Endothelial cell of umbilical vein (primary cell): ENCODE measurements at regions of chr4 and their contacts with region 1.

Region 1: DNA sequence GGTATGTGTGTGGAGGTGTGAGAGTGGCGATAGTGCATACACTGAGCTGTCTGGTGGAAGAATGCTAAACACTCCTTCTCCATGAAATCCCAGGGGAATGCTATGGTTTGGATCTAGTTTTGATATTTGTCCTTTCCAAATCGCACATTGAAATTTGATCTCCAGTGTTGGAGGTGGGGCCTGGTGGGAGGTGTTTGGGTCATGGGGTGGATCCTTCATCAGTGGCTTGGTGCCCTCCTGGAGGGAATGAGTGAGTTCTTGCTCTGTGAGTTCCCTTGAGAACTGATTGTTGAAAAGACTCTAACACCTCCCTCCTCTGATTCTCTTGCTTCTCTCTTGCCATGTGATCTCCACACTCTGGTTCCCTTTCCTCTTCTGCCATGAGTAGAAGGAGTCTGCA is 114.1 kb upstream of the HHIP start:
- DNase-seq: no peak
- H3K4me3 ChIP-seq: no peak overlapping the region
- H3K27ac ChIP-seq: no peak overlapping the region
- H3K4me1 ChIP-seq: no peaks in the 10 kb centered on the region
- H3K27me3 ChIP-seq: no peaks in the 10 kb centered on the region
- CTCF ChIP-seq: no peak
- POLR2A ChIP-seq: no peak

Region 2: GRCh38 chr4:144499777-144500176 is 32.1 kb before region 1 on chr4:
- CTCF ChIA-PET with region 1: no interaction called
- POLR2A ChIA-PET with region 1: no interaction called
- dilution Hi-C with region 1: no loop called
- intact Hi-C with region 1: loop called (anchors 5 kb)
- DNase-seq: no peak
- H3K4me3 ChIP-seq: no peak overlapping the region
- H3K27ac ChIP-seq: no peak overlapping the region
- H3K4me1 ChIP-seq: no peaks in the 10 kb centered on the region
- H3K27me3 ChIP-seq: no peaks in the 10 kb centered on the region
- CTCF ChIP-seq: no peak
- POLR2A ChIP-seq: no peak